BJ (cell line): ENCODE measurements at regions of chr11 and their contacts with region 1.

Region 1: GRCh38 chr11:65366340-65366773 is 11.8 kb downstream of the TIGD3 start:
- DNase-seq: no peak
- H3K4me3 ChIP-seq: no peak overlapping the region
- H3K27me3 ChIP-seq: no peaks in the 10 kb centered on the region
- CTCF ChIP-seq: peak; percentile 74

Region 2: DNA sequence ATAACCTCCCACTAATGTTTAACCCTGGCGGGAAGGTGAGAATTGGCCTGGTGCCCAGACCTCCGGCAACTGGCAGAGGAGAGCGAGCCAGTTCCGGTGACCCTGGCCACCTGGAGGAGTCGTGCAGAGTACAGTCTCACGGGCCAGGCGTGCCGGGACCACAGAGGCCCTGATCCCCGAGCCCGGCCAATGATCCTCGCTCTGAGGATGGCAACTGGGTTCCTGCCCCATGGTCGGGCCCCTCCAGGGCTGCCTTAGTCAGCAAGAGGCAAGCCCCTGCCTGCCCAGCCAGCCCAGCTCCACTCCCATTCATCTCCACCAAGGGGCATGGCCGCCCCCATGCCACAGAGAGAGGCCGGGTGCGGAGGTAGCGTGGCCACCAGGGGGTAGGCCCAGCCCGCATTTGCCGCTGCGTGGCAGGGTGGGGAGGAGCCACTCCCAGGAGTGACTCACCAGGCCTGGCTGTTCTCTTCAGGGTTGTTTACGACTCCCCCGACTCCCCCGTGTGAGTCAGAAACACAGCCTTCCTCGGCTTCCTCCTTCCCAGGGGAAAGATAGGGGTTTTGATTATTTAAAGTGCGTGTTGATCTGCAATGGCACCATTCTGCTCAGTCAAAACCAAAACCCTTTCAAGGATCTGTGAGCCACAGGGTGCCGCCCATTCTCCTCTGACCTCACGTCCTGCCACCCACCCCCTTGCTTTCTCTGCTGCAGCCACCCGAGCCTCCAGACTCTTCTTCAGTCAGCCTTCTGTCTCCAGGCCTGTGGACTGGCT is 15.9 kb after region 1 on chr11 and contains the start of gene SLC25A45:
- CTCF ChIA-PET with region 1: interaction called, 14 read pairs
- POLR2A ChIA-PET with region 1: no interaction called
- DNase-seq: peak; percentile 94
- H3K4me3 ChIP-seq: peak within 1 kb of the TSS; percentile 33
- H3K27me3 ChIP-seq: no peaks in the 10 kb centered on the region
- CTCF ChIP-seq: peak; percentile 84
- polyA plus RNA-seq, gene SLC25A45: 1.1 and 2.1 TPM in 2 replicates